MCF 10A (cell line): ENCODE measurements at regions of chr14 and their contacts with region 1.

Region 1: DNA sequence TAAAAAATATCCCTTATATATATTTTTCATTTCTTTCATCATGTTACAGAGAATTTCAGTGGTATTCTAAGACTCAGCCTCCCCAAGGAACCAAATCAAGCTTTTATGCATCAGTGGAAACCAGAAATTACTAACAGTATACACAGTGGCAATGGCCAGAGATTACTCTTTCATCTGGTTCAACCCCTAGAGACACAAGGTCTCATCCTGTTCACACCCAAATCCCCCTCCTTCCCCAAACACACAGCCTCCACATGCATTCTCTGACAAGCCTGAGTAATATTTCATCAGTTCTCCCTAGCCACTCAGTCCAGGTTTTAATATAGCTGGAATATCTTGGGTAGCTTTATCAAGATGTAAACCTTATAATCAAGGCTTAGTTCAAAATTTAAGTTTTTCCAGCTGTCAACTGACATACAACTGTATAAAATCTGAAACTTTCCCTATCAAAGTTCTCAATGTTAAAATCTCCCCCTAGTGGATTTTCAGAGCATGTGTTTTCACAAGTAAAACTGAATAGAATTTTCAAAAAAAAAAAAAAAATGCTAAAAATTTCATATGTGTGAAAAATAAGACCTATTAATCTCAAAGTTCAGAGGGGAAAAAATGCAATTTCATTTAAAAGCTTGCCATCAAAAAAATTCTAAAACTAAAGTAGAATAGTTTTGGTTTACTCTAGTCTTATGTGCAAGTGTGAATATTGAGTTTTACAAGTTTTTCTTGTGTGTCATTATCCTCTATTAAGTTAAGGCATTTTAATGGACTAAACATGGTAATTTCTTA is 10.5 kb upstream of the SSTR1 start:
- DNase-seq: peak; percentile 3
- H3K4me3 Mint-ChIP-seq: no peak overlapping the region
- H3K27ac Mint-ChIP-seq: peak overlapping the region; percentile 63
- H3K4me1 Mint-ChIP-seq: peaks cover 29% of the 10 kb centered on the region
- H3K27me3 Mint-ChIP-seq: no peaks in the 10 kb centered on the region
- CTCF ChIP-seq: peak; percentile 52

Region 2: DNA sequence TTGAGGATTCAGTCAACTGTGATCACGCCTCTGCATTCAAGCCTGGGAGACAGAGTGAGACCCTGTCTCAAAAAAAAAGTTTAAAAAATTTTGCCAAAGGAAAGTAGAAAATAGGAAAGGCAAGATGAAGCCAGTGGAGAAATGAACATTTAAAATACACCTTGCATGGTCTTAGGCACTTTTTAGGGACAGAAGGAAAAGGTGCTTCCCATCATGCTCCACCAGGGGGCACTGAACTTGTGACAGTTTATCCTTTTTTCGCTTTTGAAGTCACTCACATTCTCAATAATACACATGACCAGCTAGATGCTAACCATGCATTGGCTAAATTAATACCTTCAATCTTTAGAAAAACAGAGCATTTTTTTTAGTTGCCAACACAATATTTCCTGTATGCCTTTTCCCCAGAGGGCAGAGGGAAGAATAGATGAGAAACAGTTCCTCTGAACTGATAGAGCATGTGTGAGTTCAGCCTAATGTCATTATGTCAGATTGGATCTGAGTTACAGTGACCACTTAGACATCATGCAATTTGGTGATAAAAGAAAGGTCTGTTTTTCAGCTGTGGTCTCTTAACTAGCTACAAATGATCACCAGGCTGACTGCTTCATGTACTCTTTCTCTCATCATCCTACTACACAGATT is 211.2 kb before region 1 on chr14:
- CTCF ChIA-PET with region 1: interaction called, 5 read pairs
- POLR2A ChIA-PET with region 1: interaction called, 3 read pairs
- intact Hi-C with region 1: loop called (anchors 1 kb)
- DNase-seq: peak; percentile 72
- H3K4me3 Mint-ChIP-seq: no peak overlapping the region
- H3K27ac Mint-ChIP-seq: no peak overlapping the region
- H3K4me1 Mint-ChIP-seq: no peaks in the 10 kb centered on the region
- H3K27me3 Mint-ChIP-seq: no peaks in the 10 kb centered on the region
- CTCF ChIP-seq: peak; percentile 77

Region 3: DNA sequence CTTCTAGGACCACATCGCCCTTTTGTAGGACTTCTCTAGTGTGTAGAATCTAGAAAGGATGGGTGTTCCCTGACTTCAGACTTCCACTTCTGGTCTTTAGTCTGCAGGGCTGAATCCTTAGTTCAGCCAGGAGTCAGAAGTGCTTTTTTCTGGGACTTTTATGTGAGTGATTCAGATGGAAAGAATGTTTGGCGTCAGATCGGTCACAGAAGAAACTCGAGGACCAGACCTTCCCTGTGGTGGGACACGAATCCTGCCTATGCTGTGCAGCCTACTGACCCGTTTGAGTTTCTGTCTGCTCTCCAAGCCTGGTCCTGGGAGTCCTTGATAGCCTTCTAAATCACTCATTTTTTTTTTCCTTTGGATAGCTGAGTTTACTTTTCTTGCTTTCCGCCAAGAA is 154.8 kb before region 1 on chr14:
- CTCF ChIA-PET with region 1: no interaction called
- POLR2A ChIA-PET with region 1: no interaction called
- intact Hi-C with region 1: no loop called
- DNase-seq: peak; percentile 37
- H3K4me3 Mint-ChIP-seq: no peak overlapping the region
- H3K27ac Mint-ChIP-seq: no peak overlapping the region
- H3K4me1 Mint-ChIP-seq: peaks cover 5% of the 10 kb centered on the region
- H3K27me3 Mint-ChIP-seq: no peaks in the 10 kb centered on the region
- CTCF ChIP-seq: no peak

Region 4: DNA sequence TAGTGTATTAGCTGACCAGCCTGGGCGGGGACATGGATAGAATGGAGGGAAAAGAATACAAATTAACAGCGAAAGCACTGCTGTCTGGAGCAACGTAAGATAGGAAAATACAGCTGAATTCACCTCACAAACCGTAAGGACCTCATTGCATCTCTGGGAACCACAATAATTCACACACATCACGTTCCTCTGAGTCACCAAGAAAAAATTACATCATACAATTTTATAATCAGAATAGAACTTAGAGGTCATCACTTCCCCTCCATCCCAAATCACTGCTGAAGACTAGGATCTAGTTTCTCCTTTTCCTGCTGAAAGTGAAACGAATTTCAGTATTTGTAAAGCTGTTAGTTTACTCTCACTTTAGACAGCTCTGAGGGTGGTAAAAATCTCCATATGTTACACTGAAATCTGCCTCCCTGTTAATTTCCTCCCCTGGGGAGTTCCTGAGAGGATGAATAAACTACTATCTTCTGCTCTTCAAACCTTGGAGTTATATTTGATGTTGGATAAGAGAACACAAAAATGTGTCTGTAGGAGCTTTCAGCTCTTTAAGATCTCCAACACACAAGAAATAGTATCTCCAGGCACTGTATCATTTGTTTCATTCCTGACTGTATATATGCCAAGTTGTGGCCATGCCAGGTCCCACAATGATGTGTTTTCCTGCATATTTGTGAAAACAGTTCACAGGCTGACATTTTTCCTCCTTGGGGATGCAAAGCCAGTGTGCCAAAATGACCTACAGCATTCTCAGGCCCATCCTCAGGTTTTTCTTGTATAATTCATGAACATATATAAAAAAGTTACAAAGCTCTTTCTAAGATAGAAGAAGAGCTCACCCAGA is 53.3 kb before region 1 on chr14:
- CTCF ChIA-PET with region 1: interaction called, 13 read pairs
- POLR2A ChIA-PET with region 1: interaction called, 3 read pairs
- intact Hi-C with region 1: no loop called
- DNase-seq: peak; percentile 62
- H3K4me3 Mint-ChIP-seq: peak overlapping the region; percentile 9
- H3K27ac Mint-ChIP-seq: peak overlapping the region; percentile 61
- H3K4me1 Mint-ChIP-seq: peaks cover 26% of the 10 kb centered on the region
- H3K27me3 Mint-ChIP-seq: no peaks in the 10 kb centered on the region
- CTCF ChIP-seq: no peak

Region 5: GRCh38 chr14:38184132-38184531 is 13.1 kb before region 1 on chr14:
- CTCF ChIA-PET with region 1: interaction called, 11 read pairs
- POLR2A ChIA-PET with region 1: interaction called, 5 read pairs
- intact Hi-C with region 1: no loop called
- DNase-seq: no peak
- H3K4me3 Mint-ChIP-seq: no peak overlapping the region
- H3K27ac Mint-ChIP-seq: no peak overlapping the region
- H3K4me1 Mint-ChIP-seq: peaks cover 19% of the 10 kb centered on the region
- H3K27me3 Mint-ChIP-seq: no peaks in the 10 kb centered on the region
- CTCF ChIP-seq: no peak

Region 6: GRCh38 chr14:38217553-38217952 is 20.4 kb after region 1 on chr14:
- CTCF ChIA-PET with region 1: interaction called, 4 read pairs
- POLR2A ChIA-PET with region 1: interaction called, 31 read pairs
- intact Hi-C with region 1: no loop called
- DNase-seq: peak; percentile 35
- H3K4me3 Mint-ChIP-seq: peak overlapping the region; percentile 56
- H3K27ac Mint-ChIP-seq: peak overlapping the region; percentile 95
- H3K4me1 Mint-ChIP-seq: peaks cover 29% of the 10 kb centered on the region
- H3K27me3 Mint-ChIP-seq: no peaks in the 10 kb centered on the region
- CTCF ChIP-seq: no peak

Region 7: GRCh38 chr14:38248321-38249050 is 51.3 kb after region 1 on chr14:
- CTCF ChIA-PET with region 1: no interaction called
- POLR2A ChIA-PET with region 1: interaction called, 4 read pairs
- intact Hi-C with region 1: loop called (anchors 5 kb)
- DNase-seq: peak; percentile 11
- H3K4me3 Mint-ChIP-seq: no peak overlapping the region
- H3K27ac Mint-ChIP-seq: no peak overlapping the region
- H3K4me1 Mint-ChIP-seq: no peaks in the 10 kb centered on the region
- H3K27me3 Mint-ChIP-seq: no peaks in the 10 kb centered on the region
- CTCF ChIP-seq: no peak

Region 8: GRCh38 chr14:38469156-38469555 is 272.0 kb after region 1 on chr14:
- CTCF ChIA-PET with region 1: no interaction called
- POLR2A ChIA-PET with region 1: no interaction called
- intact Hi-C with region 1: no loop called
- DNase-seq: peak; percentile 68
- H3K4me3 Mint-ChIP-seq: no peak overlapping the region
- H3K27ac Mint-ChIP-seq: no peak overlapping the region
- H3K4me1 Mint-ChIP-seq: no peaks in the 10 kb centered on the region
- H3K27me3 Mint-ChIP-seq: no peaks in the 10 kb centered on the region
- CTCF ChIP-seq: no peak